Calu3 (cell line): ENCODE measurements at regions of chr12 and their contacts with region 1.

Region 1: GRCh38 chr12:102740141-102740955 is 176.7 kb downstream of the PAH start:
- DNase-seq: no peak
- H3K4me3 Mint-ChIP-seq: no peak overlapping the region
- H3K27ac Mint-ChIP-seq: no peak overlapping the region
- H3K4me1 Mint-ChIP-seq: no peaks in the 10 kb centered on the region
- H3K27me3 Mint-ChIP-seq: no peaks in the 10 kb centered on the region
- CTCF ChIP-seq: no peak

Region 2: GRCh38 chr12:102095675-102096263 is 644.6 kb before region 1 on chr12:
- CTCF ChIA-PET with region 1: no interaction called
- intact Hi-C with region 1: loop called (anchors 5 kb)
- DNase-seq: peak; percentile 12
- H3K4me3 Mint-ChIP-seq: no peak overlapping the region
- H3K27ac Mint-ChIP-seq: no peak overlapping the region
- H3K4me1 Mint-ChIP-seq: no peaks in the 10 kb centered on the region
- H3K27me3 Mint-ChIP-seq: no peaks in the 10 kb centered on the region
- CTCF ChIP-seq: peak; percentile 20

Region 3: GRCh38 chr12:102169922-102170621 is 570.3 kb before region 1 on chr12:
- CTCF ChIA-PET with region 1: interaction called, 3 read pairs
- intact Hi-C with region 1: loop called (anchors 1 kb)
- DNase-seq: peak; percentile 20
- H3K4me3 Mint-ChIP-seq: no peak overlapping the region
- H3K27ac Mint-ChIP-seq: no peak overlapping the region
- H3K4me1 Mint-ChIP-seq: peaks cover 7% of the 10 kb centered on the region
- H3K27me3 Mint-ChIP-seq: no peaks in the 10 kb centered on the region
- CTCF ChIP-seq: peak; percentile 46

Region 4: DNA sequence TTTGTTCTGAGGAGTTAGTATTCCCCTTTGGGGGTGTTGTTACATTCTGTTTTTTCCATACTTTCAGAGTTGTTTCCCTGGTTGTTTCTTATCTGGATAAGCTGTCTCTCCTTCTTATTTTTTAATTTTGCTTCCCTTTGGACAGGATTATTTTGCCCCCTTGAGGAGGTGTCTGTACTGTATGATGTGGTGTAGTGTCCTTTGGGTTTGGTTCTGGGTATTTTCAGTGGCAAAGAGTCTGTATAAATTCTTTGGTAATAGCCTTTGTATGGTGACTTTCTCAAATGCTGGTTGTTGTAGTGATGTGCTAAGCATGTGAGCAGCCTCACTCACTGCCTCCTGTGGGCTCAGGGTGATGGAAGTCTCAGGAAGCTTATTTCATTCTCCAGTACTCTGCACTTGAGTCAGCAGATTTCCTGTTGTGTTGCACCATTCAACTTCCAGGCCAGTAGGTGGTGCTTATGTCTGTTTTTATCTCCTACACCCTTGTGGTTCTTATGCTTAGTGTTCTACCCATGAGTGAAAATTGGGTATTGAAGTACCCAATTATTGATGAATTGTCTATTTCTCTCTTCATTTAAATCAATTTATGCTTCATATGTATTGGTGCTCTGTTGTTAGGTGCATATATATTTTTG is 439.4 kb before region 1 on chr12:
- CTCF ChIA-PET with region 1: no interaction called
- intact Hi-C with region 1: loop called (anchors 1 kb)
- DNase-seq: peak; percentile 38
- H3K4me3 Mint-ChIP-seq: no peak overlapping the region
- H3K27ac Mint-ChIP-seq: no peak overlapping the region
- H3K4me1 Mint-ChIP-seq: no peaks in the 10 kb centered on the region
- H3K27me3 Mint-ChIP-seq: no peaks in the 10 kb centered on the region
- CTCF ChIP-seq: no peak

Region 5: DNA sequence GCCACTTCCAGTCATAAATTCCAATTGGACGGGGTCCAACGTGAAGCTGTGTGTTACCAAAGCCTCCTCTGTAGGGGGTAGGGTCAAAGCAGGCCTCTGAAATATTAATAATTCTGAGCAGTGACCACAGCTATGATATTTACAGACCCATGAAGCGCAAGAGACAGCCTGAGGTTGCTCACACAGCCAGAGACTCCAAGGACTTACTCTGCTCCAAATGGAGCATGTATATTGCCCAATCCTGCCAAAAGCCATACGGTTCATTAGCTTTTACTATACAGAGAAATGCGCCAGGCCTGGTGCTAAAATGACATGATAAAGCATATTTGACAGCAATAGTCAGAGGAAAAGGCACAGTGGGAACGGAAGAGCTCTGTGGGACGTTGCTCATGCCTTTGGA is 25.4 kb after region 1 on chr12:
- CTCF ChIA-PET with region 1: no interaction called
- intact Hi-C with region 1: no loop called
- DNase-seq: no peak
- H3K4me3 Mint-ChIP-seq: no peak overlapping the region
- H3K27ac Mint-ChIP-seq: no peak overlapping the region
- H3K4me1 Mint-ChIP-seq: no peaks in the 10 kb centered on the region
- H3K27me3 Mint-ChIP-seq: peaks cover 7% of the 10 kb centered on the region
- CTCF ChIP-seq: no peak